ENCODE measurements at regions of chr3 and their contacts with region 1.

Region 1: DNA sequence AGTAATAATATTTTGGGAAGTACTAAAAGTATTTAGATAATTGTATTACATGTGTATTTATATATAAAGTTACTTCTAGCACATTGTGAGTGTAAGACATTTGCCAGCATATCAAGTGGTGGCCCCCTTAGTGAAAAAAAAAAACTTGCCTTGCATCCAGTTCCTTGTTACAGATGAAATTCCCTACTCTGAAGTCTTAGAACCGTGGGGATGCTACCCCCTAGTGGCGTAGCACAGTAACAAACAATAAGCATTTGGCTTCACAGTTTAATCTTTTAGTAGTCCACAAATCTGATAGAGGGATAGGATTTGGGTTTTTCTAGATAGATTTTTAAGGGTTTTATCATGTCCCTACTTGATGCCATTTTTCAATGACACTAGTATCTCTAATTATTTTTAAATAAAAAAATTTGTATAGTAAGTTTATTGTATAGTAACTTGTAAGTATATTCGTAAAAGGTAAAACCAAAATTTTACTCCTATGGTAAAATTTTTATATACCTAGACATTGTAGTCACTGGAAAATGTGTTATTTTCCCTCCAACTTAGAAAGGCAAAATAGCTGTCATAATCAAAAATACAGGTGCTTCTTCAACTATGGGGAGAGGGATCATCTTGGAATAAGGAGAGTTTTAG is 14.3 kb downstream of the SMC4 start:
- DNase-seq: peak; percentile 60
- H3K4me3 Mint-ChIP-seq: no peak overlapping the region
- H3K27ac Mint-ChIP-seq: no peak overlapping the region
- H3K4me1 Mint-ChIP-seq: peaks cover 63% of the 10 kb centered on the region
- H3K27me3 Mint-ChIP-seq: no peaks in the 10 kb centered on the region

Region 2: GRCh38 chr3:160170409-160171370 is 243.0 kb before region 1 on chr3:
- CTCF ChIA-PET with region 1: no interaction called
- POLR2A ChIA-PET with region 1: no interaction called
- DNase-seq: no peak
- H3K4me3 Mint-ChIP-seq: no peak overlapping the region
- H3K27ac Mint-ChIP-seq: no peak overlapping the region
- H3K4me1 Mint-ChIP-seq: peaks cover 20% of the 10 kb centered on the region
- H3K27me3 Mint-ChIP-seq: peaks cover 12% of the 10 kb centered on the region

Region 3: DNA sequence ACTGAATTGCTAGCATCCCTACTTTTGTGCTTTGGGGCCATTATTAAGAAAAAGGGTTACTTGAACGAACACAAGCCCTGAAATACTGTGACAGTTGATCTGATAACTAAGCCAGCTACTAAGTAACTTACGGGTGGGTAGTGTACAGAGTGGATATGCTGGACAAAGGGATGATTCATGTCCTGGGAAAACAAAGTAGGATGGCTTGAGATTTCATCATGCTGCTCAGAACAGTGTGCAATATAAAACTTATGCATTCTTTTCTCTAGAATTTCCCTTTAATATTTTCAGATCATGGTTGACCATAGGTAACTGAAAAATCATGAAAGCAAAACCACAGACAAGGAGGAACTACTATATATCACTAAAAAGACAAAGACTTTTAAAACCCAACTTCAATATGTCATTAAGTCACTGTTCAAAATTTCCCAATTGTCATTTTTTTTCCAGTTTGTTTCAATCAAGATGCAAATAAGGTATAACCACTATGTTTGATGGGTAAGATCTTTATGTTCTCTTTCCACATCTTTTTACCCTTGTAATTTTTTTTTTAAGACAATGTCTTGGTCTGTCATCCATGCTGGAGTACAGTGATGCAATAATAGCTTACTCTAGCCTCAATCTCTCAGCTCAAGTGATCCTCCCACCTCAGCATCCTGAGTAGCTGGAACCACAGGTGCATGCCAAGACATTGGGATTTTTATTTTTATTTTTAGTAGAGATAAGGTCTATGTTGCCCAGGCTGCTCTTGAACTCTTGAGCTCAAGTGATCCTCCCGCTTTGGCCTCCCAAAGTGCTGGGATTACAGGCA is 82.4 kb before region 1 on chr3:
- CTCF ChIA-PET with region 1: no interaction called
- POLR2A ChIA-PET with region 1: no interaction called
- DNase-seq: no peak
- H3K4me3 Mint-ChIP-seq: no peak overlapping the region
- H3K27ac Mint-ChIP-seq: no peak overlapping the region
- H3K4me1 Mint-ChIP-seq: no peaks in the 10 kb centered on the region
- H3K27me3 Mint-ChIP-seq: no peaks in the 10 kb centered on the region

Region 4: GRCh38 chr3:160399125-160400029 is 14.4 kb before region 1 on chr3 and contains the starts of genes IFT80 and SMC4:
- CTCF ChIA-PET with region 1: interaction called, 20 read pairs
- POLR2A ChIA-PET with region 1: interaction called, 182 read pairs
- DNase-seq: peak; percentile 97
- H3K4me3 Mint-ChIP-seq: peak within 1 kb of the TSS; percentile 94
- H3K27ac Mint-ChIP-seq: peak within 1 kb of the TSS; percentile 89
- H3K4me1 Mint-ChIP-seq: peaks cover 44% of the 10 kb centered on the region
- H3K27me3 Mint-ChIP-seq: no peaks in the 10 kb centered on the region
- total RNA-seq, gene IFT80: 22.8 to 25.9 TPM
- total RNA-seq, gene SMC4: 217 to 222 TPM

Region 5: DNA sequence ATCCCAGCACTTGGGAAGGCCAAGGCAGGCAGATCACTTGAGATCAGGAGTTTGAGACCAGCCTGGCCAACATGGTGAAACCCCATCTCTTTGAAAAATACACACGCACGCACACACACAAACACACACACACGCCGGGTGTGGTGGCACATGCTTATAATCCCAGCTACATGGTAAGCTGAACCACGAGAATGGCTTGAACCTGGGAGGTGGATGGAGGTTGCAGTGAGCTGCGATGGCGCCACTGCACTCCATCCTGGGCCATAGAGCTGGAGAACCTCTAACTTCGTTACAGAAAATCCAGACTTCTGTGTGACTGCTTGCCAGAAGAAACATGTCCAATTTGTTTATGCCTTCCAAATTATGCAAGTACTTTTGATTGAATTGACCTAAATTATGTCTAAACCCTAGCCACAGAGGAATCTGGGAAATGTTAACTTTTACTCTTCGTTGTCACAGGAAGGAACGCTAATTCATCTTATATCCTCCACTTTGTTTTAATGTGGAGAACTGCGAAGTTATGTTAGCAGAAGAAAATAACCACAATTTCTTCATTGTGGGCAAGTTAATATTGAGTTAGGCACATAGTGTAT is 14.2 kb after region 1 on chr3:
- CTCF ChIA-PET with region 1: interaction called, 27 read pairs
- POLR2A ChIA-PET with region 1: interaction called, 14 read pairs
- DNase-seq: no peak
- H3K4me3 Mint-ChIP-seq: no peak overlapping the region
- H3K27ac Mint-ChIP-seq: peak overlapping the region; percentile 26
- H3K4me1 Mint-ChIP-seq: peaks cover 15% of the 10 kb centered on the region
- H3K27me3 Mint-ChIP-seq: no peaks in the 10 kb centered on the region

Region 6: DNA sequence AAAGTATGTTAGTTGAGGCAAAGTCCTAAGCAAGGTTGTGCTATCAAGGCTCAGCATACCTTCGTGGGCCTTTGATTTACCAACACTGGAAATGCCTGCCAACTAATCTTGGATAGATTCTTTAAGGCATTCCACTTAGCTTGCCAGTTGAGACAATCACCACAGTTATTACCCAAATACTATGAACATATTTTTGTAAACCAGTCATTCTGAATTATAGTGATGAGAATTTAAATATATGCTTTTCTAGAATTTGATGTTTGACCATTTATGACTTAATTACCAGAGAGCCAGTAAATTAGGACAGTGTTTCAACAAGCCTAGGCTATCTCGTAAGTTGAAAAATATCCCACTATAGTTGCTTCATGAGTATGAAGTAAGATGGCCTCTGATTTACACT is 20.3 kb after region 1 on chr3:
- CTCF ChIA-PET with region 1: interaction called, 27 read pairs
- POLR2A ChIA-PET with region 1: interaction called, 24 read pairs
- DNase-seq: no peak
- H3K4me3 Mint-ChIP-seq: no peak overlapping the region
- H3K27ac Mint-ChIP-seq: no peak overlapping the region
- H3K4me1 Mint-ChIP-seq: peaks cover 47% of the 10 kb centered on the region
- H3K27me3 Mint-ChIP-seq: no peaks in the 10 kb centered on the region

Measured in activated CD4-positive, alpha-beta memory T cell treated with anti-CD3 and anti-CD28 coated beads, Interleukin-2, amount 10 ng/mL, durations not matched to agents 7 days and 5 days (primary cell).